ENCODE measurements at regions of chr5 and their contacts with region 1.

Region 1: GRCh38 chr5:112691758-112692157 is 45.9 kb upstream of the APC start:
- DNase-seq: peak; percentile 71
- H3K4me3 ChIP-seq: no peak overlapping the region
- H3K27ac ChIP-seq: no peak overlapping the region
- H3K4me1 ChIP-seq: no peaks in the 10 kb centered on the region
- CTCF ChIP-seq: peak; percentile 79

Region 2: DNA sequence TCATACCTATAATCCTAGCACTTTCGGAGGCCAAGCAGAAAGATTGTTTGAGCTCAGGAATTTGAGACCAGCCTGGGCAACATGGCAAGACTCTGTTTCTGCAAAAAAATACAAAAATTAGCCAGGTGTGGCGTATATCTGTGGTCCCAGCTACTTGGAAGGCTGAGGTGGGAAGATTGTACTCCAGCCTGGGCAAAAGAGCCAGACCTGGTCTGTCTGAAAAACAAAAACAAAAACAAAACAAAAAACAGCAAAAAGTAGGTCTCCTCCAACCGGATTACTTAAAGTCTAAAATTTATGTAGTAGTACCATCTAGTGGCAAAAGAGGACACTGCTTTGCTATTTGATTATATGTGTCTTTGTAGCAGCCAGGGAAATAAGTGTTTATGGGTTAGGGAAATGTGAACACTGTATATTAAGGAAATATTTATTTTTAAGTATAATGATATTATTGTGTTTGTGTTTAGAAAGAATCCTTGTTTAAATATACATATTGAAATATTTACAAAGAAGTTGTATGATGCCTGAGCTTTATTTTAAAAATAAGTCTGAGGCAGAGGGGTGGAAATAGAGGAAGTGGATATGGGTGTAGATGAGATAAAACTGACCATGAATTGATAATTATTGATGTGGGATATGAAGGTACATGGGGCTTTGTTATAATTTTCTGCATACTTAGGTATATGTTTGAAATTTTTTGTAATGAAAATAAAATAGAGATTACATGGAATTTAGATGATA is 65.9 kb after region 1 on chr5:
- CTCF ChIA-PET with region 1: interaction called, 6 read pairs
- POLR2A ChIA-PET with region 1: interaction called, 3 read pairs
- intact Hi-C with region 1: loop called (anchors 1 kb)
- DNase-seq: peak; percentile 74
- H3K4me3 ChIP-seq: no peak overlapping the region
- H3K27ac ChIP-seq: no peak overlapping the region
- H3K4me1 ChIP-seq: no peaks in the 10 kb centered on the region
- CTCF ChIP-seq: peak; percentile 94

Region 3: GRCh38 chr5:112848116-112848811 is 156.5 kb after region 1 on chr5:
- CTCF ChIA-PET with region 1: no interaction called
- POLR2A ChIA-PET with region 1: interaction called, 3 read pairs
- intact Hi-C with region 1: loop called (anchors 5 kb)
- DNase-seq: peak; percentile 79
- H3K4me3 ChIP-seq: no peak overlapping the region
- H3K27ac ChIP-seq: no peak overlapping the region
- H3K4me1 ChIP-seq: no peaks in the 10 kb centered on the region
- CTCF ChIP-seq: peak; percentile 83

Region 4: GRCh38 chr5:112960315-112960714 is 268.6 kb after region 1 on chr5:
- CTCF ChIA-PET with region 1: no interaction called
- POLR2A ChIA-PET with region 1: no interaction called
- intact Hi-C with region 1: loop called (anchors 5 kb)
- DNase-seq: no peak
- H3K4me3 ChIP-seq: no peak overlapping the region
- H3K27ac ChIP-seq: no peak overlapping the region
- H3K4me1 ChIP-seq: peaks cover 14% of the 10 kb centered on the region
- CTCF ChIP-seq: no peak